Activated T-helper 1 cell treated with anti-CD3 and anti-CD28 coated beads, Interleukin-12 subunit alpha, Interleukin-12 subunit beta, Interleukin-2, Interleukin-4 antibody, amounts not matched to agents 30 ng/mL and 10 ng/mL and 1 ng/mL, durations not matched to agents 14 hours and 24 hours and 36 hours (primary cell): ENCODE measurements at regions of chr22 and their contacts with region 1.

Region 1: GRCh38 chr22:50674606-50675549 is 2.3 kb downstream of the SHANK3 start:
- DNase-seq: no peak
- H3K4me3 Mint-ChIP-seq: peak overlapping the region; percentile 49
- H3K27ac Mint-ChIP-seq: no peak overlapping the region
- H3K4me1 Mint-ChIP-seq: peaks cover 5% of the 10 kb centered on the region
- H3K27me3 Mint-ChIP-seq: peaks cover 41% of the 10 kb centered on the region

Region 2: DNA sequence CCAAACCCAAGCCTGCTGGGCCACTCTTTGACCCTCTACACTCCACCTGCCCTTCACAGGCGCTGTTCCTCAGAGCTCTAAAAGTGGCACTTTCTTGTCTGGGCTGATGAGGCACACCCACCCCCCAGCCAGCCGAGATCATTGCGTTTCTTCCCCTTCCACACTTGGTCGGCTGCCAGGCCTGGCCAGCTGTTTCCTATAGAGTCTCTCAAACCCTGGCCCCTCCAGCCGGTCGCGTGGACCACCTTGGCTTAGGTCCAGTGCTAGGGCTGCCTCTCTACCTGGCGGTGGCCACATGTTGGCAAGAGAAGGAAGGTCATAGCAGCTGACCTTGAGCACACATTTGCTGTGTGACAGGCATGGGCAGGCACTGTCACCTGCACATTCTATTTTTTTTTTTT is 271.2 kb before region 1 on chr22:
- intact Hi-C with region 1: no loop called
- DNase-seq: no peak
- H3K4me3 Mint-ChIP-seq: no peak overlapping the region
- H3K27ac Mint-ChIP-seq: peak overlapping the region; percentile 44
- H3K4me1 Mint-ChIP-seq: peaks cover 14% of the 10 kb centered on the region
- H3K27me3 Mint-ChIP-seq: no peaks in the 10 kb centered on the region

Region 3: GRCh38 chr22:50627642-50628542 is 47.0 kb before region 1 on chr22 and contains the start of gene ARSA:
- intact Hi-C with region 1: loop called (anchors 5 kb)
- DNase-seq: peak; percentile 78
- H3K4me3 Mint-ChIP-seq: peak within 1 kb of the TSS; percentile 91
- H3K27ac Mint-ChIP-seq: peak within 1 kb of the TSS; percentile 52
- H3K4me1 Mint-ChIP-seq: peaks cover 16% of the 10 kb centered on the region
- H3K27me3 Mint-ChIP-seq: peaks cover 2% of the 10 kb centered on the region
- total RNA-seq, gene ARSA: 26.2 and 27.3 TPM in 2 replicates